Sigmoid colon (tissue), 7 donors: ENCODE measurements at regions of chr19 and their contacts with region 1.

Region 1: GRCh38 chr19:21328885-21329605 is at the start of gene ZNF708:
- DNase-seq: peak; percentile 93
- H3K4me3 ChIP-seq: peak within 1 kb of the TSS; percentile 76 to 79 (median 76)
- H3K27ac ChIP-seq: peak within 1 kb of the TSS; percentile 96 to 99 (median 97)
- H3K4me1 ChIP-seq: peaks cover 0 to 21% (median 20%) of the 10 kb centered on the region in 4 donors
- H3K27me3 ChIP-seq: no peaks in the 10 kb centered on the region
- CTCF ChIP-seq: no peak
- EP300 ChIP-seq: no peak
- POLR2A ChIP-seq: peak; percentile 82 to 84
- total RNA-seq, gene ZNF708: 11.9 to 25.2 (median 17.9) TPM

Region 2: GRCh38 chr19:21358768-21359451 is 29.9 kb after region 1 on chr19 and contains the start of gene ZNF738:
- intact Hi-C with region 1: loop called (anchors 1 kb)
- DNase-seq: peak; percentile 96
- H3K4me3 ChIP-seq: peak within 1 kb of the TSS; percentile 59 to 72 (median 64)
- H3K27ac ChIP-seq: peak within 1 kb of the TSS; percentile 74 to 89 (median 82)
- H3K4me1 ChIP-seq: no peaks in the 10 kb centered on the region
- H3K27me3 ChIP-seq: no peaks in the 10 kb centered on the region
- CTCF ChIP-seq: no peak
- EP300 ChIP-seq: no peak
- POLR2A ChIP-seq: peak in 1 of 2 donors; percentile 17
- total RNA-seq, gene ZNF738: 3.9 to 7.9 (median 5.5) TPM

Region 3: GRCh38 chr19:21396893-21397572 is 68.0 kb after region 1 on chr19 and contains the start of gene ZNF493:
- intact Hi-C with region 1: loop called (anchors 1 kb)
- DNase-seq: peak; percentile 97
- H3K4me3 ChIP-seq: peak within 1 kb of the TSS; percentile 60 to 73 (median 64)
- H3K27ac ChIP-seq: peak within 1 kb of the TSS; percentile 76 to 89 (median 82)
- H3K4me1 ChIP-seq: peaks cover 0 to 33% (median 22%) of the 10 kb centered on the region in 4 donors
- H3K27me3 ChIP-seq: no peaks in the 10 kb centered on the region
- CTCF ChIP-seq: no peak
- EP300 ChIP-seq: no peak
- POLR2A ChIP-seq: peak; percentile 67 to 70
- total RNA-seq, gene ZNF493: 28.2 to 49.3 (median 39.6) TPM

Region 4: GRCh38 chr19:21505459-21506451 is 176.7 kb after region 1 on chr19 and contains the start of gene ZNF429:
- intact Hi-C with region 1: loop called (anchors 10 kb)
- DNase-seq: peak; percentile 96
- H3K4me3 ChIP-seq: peak within 1 kb of the TSS; percentile 63 to 85 (median 66)
- H3K27ac ChIP-seq: peak within 1 kb of the TSS; percentile 88 to 96 (median 90)
- H3K4me1 ChIP-seq: peaks cover 0 to 30% (median 17%) of the 10 kb centered on the region in 4 donors
- H3K27me3 ChIP-seq: no peaks in the 10 kb centered on the region
- CTCF ChIP-seq: no peak
- EP300 ChIP-seq: no peak
- POLR2A ChIP-seq: peak; percentile 57 to 82
- total RNA-seq, gene ZNF429: 10.9 to 15.7 (median 12.5) TPM